ENCODE measurements at regions of chr21 and their contacts with region 1.

Region 1: DNA sequence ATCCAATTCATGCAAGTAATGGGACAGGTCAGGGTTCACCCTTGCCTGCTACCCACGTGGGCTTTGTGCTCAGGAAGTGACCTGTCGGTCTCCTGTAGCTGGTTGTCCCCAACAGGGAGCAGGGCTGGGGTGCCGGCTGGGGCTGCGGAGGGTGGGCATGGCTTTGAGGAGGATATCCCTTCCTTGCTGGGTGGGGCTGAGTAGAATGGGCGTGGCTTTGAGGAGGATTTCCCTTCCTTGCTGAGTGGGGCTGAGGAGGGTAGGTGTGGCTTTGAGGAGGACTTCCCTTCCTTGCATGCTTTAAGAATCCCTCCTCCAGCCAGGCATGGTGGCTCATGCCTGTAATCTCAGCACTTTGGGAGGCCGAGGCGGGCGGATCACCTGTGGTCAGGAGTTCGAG is 151.3 kb downstream of the CLIC6 start:
- DNase-seq: no peak
- ATAC-seq: no peak
- H3K4me3 ChIP-seq: no peak overlapping the region
- H3K27ac ChIP-seq: peak overlapping the region; percentile 90
- H3K4me1 ChIP-seq: peaks cover 68% of the 10 kb centered on the region
- H3K27me3 ChIP-seq: no peaks in the 10 kb centered on the region
- CTCF ChIP-seq: no peak
- EP300 ChIP-seq: no peak
- POLR2A ChIP-seq: no peak
- RAD21 ChIP-seq: no peak

Region 2: DNA sequence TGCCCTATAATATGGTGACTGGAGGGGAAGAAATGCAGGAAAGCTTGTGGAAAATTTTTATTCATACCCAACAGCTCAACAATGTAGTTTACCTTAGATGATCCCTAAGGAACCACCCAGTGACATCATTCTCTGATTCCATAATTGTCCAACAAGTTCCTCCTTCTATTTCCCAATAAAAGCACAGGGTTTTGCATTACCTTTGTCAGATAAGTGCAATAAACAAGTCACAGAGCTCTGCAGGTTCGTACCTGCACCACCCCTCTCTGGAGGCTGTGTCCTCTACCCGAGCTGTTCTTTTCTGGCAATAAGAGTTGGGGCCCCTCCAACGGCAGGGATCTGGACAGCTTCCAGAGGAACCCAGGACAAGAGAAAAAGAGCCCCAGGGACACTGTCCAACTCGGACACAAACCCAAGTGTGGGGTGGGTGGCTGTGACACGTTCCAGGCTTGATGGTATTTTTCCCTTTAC is 244.0 kb before region 1 on chr21:
- CTCF ChIA-PET with region 1: no interaction called
- POLR2A ChIA-PET with region 1: no interaction called
- in situ Hi-C with region 1: no loop called
- intact Hi-C with region 1: no loop called
- DNase-seq: no peak
- ATAC-seq: no peak
- H3K4me3 ChIP-seq: no peak overlapping the region
- H3K27ac ChIP-seq: no peak overlapping the region
- H3K4me1 ChIP-seq: peaks cover 18% of the 10 kb centered on the region
- H3K27me3 ChIP-seq: no peaks in the 10 kb centered on the region
- CTCF ChIP-seq: no peak
- EP300 ChIP-seq: no peak
- POLR2A ChIP-seq: no peak
- RAD21 ChIP-seq: no peak

Region 3: GRCh38 chr21:34771512-34772028 is 48.5 kb before region 1 on chr21:
- CTCF ChIA-PET with region 1: no interaction called
- POLR2A ChIA-PET with region 1: interaction called, 10 read pairs
- in situ Hi-C with region 1: no loop called
- intact Hi-C with region 1: no loop called
- DNase-seq: peak; percentile 89
- ATAC-seq: peak; percentile 99
- H3K4me3 ChIP-seq: peak overlapping the region in 2 of 3 experiments; percentile 17 to 50; a peak in 2 of 6 replicates
- H3K27ac ChIP-seq: peak overlapping the region; percentile 81
- H3K4me1 ChIP-seq: peaks cover 44% of the 10 kb centered on the region
- H3K27me3 ChIP-seq: no peaks in the 10 kb centered on the region
- CTCF ChIP-seq: no peak
- EP300 ChIP-seq: peak in 1 of 2 experiments; percentile 75; a peak in 2 of 4 replicates
- POLR2A ChIP-seq: peak in 1 of 2 experiments; percentile 52; a peak in 2 of 4 replicates
- RAD21 ChIP-seq: no peak

Region 4: GRCh38 chr21:34795175-34795547 is 24.9 kb before region 1 on chr21:
- CTCF ChIA-PET with region 1: no interaction called
- POLR2A ChIA-PET with region 1: interaction called, 49 read pairs
- in situ Hi-C with region 1: no loop called
- intact Hi-C with region 1: no loop called
- DNase-seq: no peak
- ATAC-seq: no peak; the same call in 2 of the 3 replicates
- H3K4me3 ChIP-seq: peak overlapping the region in 1 of 3 experiments; percentile 4; a peak in 1 of 6 replicates
- H3K27ac ChIP-seq: peak overlapping the region; percentile 66
- H3K4me1 ChIP-seq: peaks cover 83% of the 10 kb centered on the region
- H3K27me3 ChIP-seq: no peaks in the 10 kb centered on the region
- CTCF ChIP-seq: 0 out of 2 replicates have a peak, but pooled peaks have one; percentile 11
- EP300 ChIP-seq: no peak
- POLR2A ChIP-seq: no peak
- RAD21 ChIP-seq: no peak

Region 5: DNA sequence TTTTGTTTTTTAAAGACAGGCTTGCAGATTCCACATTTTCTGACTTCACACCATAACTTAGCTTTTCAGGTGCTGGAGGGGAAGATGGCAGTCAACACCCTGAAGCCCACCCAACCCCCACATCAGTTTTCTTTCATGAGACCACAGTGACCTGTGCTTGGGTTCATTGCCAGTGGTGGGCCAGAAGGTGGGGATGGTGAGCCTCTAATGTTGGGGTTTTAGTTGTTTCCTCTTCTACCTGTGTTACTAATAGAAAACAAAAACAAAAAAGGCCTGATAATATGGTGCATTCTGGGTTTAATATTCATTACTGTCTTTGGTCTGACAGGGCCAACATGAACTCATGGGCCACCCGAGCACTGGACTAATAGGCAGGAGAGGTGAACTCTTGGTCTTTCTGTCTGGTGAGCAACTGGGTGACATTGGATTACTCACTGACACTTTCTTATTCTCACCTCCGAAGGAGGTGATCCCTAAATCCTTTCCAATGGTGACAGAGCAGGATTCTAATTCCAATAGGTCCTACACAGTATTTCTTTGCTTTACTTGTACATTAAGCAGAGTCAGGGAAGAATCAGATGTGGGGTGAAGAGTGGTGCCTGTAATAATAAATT is 18.4 kb before region 1 on chr21:
- CTCF ChIA-PET with region 1: no interaction called
- POLR2A ChIA-PET with region 1: interaction called, 49 read pairs
- in situ Hi-C with region 1: no loop called
- intact Hi-C with region 1: no loop called
- DNase-seq: no peak
- ATAC-seq: peak; percentile 71
- H3K4me3 ChIP-seq: no peak overlapping the region
- H3K27ac ChIP-seq: peak overlapping the region; percentile 41
- H3K4me1 ChIP-seq: peaks cover 58% of the 10 kb centered on the region
- H3K27me3 ChIP-seq: no peaks in the 10 kb centered on the region
- CTCF ChIP-seq: peak; percentile 71
- EP300 ChIP-seq: no peak
- POLR2A ChIP-seq: no peak
- RAD21 ChIP-seq: no peak; the same call in 1 of the 2 replicates

Region 6: GRCh38 chr21:34807146-34807880 is 12.7 kb before region 1 on chr21:
- CTCF ChIA-PET with region 1: no interaction called
- POLR2A ChIA-PET with region 1: interaction called, 36 read pairs
- in situ Hi-C with region 1: no loop called
- intact Hi-C with region 1: no loop called
- DNase-seq: no peak
- ATAC-seq: no peak
- H3K4me3 ChIP-seq: no peak overlapping the region
- H3K27ac ChIP-seq: peak overlapping the region; percentile 1
- H3K4me1 ChIP-seq: peaks cover 40% of the 10 kb centered on the region
- H3K27me3 ChIP-seq: no peaks in the 10 kb centered on the region
- CTCF ChIP-seq: no peak
- EP300 ChIP-seq: no peak
- POLR2A ChIP-seq: no peak
- RAD21 ChIP-seq: no peak

Region 7: GRCh38 chr21:34836103-34836932 is 16.3 kb after region 1 on chr21:
- CTCF ChIA-PET with region 1: no interaction called
- POLR2A ChIA-PET with region 1: interaction called, 76 read pairs
- in situ Hi-C with region 1: no loop called
- intact Hi-C with region 1: no loop called
- DNase-seq: peak; percentile 92
- ATAC-seq: peak; percentile 92
- H3K4me3 ChIP-seq: peak overlapping the region; percentile 19 to 45 (median 21)
- H3K27ac ChIP-seq: peak overlapping the region; percentile 92
- H3K4me1 ChIP-seq: peaks cover 54% of the 10 kb centered on the region
- H3K27me3 ChIP-seq: no peaks in the 10 kb centered on the region
- CTCF ChIP-seq: no peak
- EP300 ChIP-seq: peak; percentile 48 to 87; a peak in 2 of 4 replicates
- POLR2A ChIP-seq: peak in 1 of 2 experiments; percentile 37; a peak in 1 of 4 replicates
- RAD21 ChIP-seq: 0 out of 2 replicates have a peak, but pooled peaks have one; percentile 6